ENCODE measurements at regions of chr1 and their contacts with region 1.

Region 1: GRCh38 chr1:154137888-154138287 is 17.0 kb downstream of the NUP210L start:
- DNase-seq: no peak
- ATAC-seq: no peak
- H3K4me3 ChIP-seq: no peak overlapping the region
- H3K27ac ChIP-seq: no peak overlapping the region
- H3K4me1 ChIP-seq: no peaks in the 10 kb centered on the region
- H3K27me3 ChIP-seq: no peaks in the 10 kb centered on the region
- CTCF ChIP-seq: no peak
- POLR2A ChIP-seq: no peak
- RAD21 ChIP-seq: no peak

Region 2: DNA sequence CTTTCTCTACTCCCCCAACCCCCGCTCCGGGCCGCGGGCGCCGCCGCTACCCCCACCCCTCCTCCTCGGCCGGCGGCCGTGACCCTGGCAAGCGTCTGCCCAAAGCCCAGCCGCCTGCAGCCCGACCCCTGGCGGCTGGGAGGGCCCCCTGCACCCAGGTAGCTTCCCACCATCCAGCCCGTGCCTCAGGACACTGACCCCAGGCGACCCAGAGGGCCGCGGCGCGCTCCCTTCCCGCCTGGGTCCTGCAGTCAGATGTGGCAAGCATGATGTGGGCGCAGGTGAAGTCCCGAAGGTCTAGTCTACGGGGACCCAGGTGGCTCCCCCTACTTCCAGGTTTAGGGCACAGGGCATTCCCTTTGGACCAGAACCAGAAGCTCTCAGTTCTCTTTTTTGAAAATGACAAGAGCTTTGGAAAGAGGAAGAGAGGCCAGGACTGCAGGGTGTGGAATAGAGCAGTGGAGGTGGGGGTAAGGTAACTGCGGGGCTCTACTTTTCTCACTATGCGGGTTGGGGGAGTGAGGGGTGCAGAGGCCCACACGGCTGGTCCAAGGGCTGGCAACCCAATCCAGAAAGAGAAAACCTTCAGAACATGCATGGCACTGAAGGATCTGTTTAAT is 191.2 kb before region 1 on chr1 and contains the start of gene DENND4B:
- CTCF ChIA-PET with region 1: no interaction called
- POLR2A ChIA-PET with region 1: no interaction called
- dilution Hi-C with region 1: no loop called
- in situ Hi-C with region 1: no loop called
- intact Hi-C with region 1: no loop called
- DNase-seq: peak; percentile 65
- ATAC-seq: peak; percentile 95
- H3K4me3 ChIP-seq: peak within 1 kb of the TSS; percentile 98
- H3K27ac ChIP-seq: peak within 1 kb of the TSS; percentile 97
- H3K4me1 ChIP-seq: peaks cover 9% of the 10 kb centered on the region
- H3K27me3 ChIP-seq: no peaks in the 10 kb centered on the region
- CTCF ChIP-seq: peak; percentile 92
- POLR2A ChIP-seq: no peak
- RAD21 ChIP-seq: peak; percentile 71
- total RNA-seq, gene DENND4B: 1.8 and 2.5 TPM in 2 replicates

Region 3: GRCh38 chr1:154014154-154014910 is 123.6 kb before region 1 on chr1:
- CTCF ChIA-PET with region 1: no interaction called
- POLR2A ChIA-PET with region 1: interaction called, 4 read pairs
- dilution Hi-C with region 1: no loop called
- in situ Hi-C with region 1: loop called (anchors 10 kb)
- intact Hi-C with region 1: loop called (anchors 5 kb)
- DNase-seq: peak; percentile 76
- ATAC-seq: peak; percentile 88
- H3K4me3 ChIP-seq: no peak overlapping the region
- H3K27ac ChIP-seq: no peak overlapping the region
- H3K4me1 ChIP-seq: no peaks in the 10 kb centered on the region
- H3K27me3 ChIP-seq: no peaks in the 10 kb centered on the region
- CTCF ChIP-seq: no peak
- POLR2A ChIP-seq: no peak
- RAD21 ChIP-seq: no peak

Region 4: DNA sequence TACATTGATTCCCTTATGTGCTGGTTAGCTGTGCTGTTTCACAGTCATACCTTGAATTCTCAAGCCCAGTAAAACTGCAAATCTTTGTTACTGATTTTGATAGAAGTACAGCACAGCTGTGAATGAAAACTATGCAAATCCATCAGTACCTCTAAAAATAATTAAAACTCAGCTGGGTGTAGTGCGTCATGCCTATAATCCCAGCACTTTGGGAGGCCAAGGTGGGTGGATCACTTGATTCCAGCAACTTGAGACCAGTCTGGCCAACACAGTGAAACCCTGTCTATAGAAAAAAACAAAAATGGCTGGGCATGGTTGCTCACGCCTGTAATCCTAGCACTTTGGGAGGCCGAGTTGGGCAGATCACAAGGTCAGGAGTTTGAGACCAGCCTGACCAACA is 44.2 kb before region 1 on chr1:
- CTCF ChIA-PET with region 1: no interaction called
- POLR2A ChIA-PET with region 1: no interaction called
- dilution Hi-C with region 1: no loop called
- in situ Hi-C with region 1: no loop called
- intact Hi-C with region 1: no loop called
- DNase-seq: no peak
- ATAC-seq: no peak
- H3K4me3 ChIP-seq: no peak overlapping the region
- H3K27ac ChIP-seq: no peak overlapping the region
- H3K4me1 ChIP-seq: no peaks in the 10 kb centered on the region
- H3K27me3 ChIP-seq: no peaks in the 10 kb centered on the region; the same call in 1 of the 2 replicates
- CTCF ChIP-seq: no peak
- POLR2A ChIP-seq: no peak
- RAD21 ChIP-seq: no peak

Region 5: DNA sequence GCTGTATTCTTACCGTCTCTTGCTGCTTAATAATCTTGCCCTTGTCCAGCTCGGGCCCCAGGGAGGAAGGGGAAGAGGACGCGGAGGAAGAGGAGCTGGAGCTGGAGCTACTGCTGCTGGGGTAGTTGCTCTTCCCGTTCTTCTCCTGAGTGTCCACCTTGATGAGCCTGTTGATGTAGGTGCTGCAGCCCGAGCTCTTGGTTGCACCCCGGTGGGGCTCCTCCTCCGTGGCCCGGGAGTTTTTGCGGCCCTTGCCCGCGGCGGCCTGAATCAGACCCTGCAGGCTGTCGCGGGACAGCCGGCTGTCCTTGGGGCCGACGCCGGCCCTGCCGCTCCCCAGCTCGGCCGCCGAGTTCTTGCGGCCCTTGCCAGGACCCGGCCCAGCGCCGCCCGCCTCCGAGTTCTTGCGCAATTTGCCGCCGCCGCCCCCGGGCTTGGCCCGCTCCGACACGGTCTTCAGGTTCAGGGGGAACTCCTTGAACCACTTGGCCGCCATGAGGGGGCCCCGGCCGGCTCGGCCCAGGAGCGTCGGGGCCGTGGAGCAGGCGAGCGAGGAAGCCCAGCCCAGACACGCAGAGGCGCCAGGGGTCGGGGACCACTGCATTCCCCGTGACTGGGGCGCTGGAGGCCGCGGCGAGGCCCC is 363.7 kb after region 1 on chr1:
- CTCF ChIA-PET with region 1: no interaction called
- POLR2A ChIA-PET with region 1: no interaction called
- dilution Hi-C with region 1: no loop called
- in situ Hi-C with region 1: no loop called
- intact Hi-C with region 1: no loop called
- DNase-seq: no peak
- ATAC-seq: peak; percentile 35
- H3K4me3 ChIP-seq: peak overlapping the region; percentile 2; the same call in 1 of the 2 replicates
- H3K27ac ChIP-seq: no peak overlapping the region
- H3K4me1 ChIP-seq: peaks cover 2% of the 10 kb centered on the region; the same call in 1 of the 2 replicates
- H3K27me3 ChIP-seq: peaks cover 69% of the 10 kb centered on the region
- CTCF ChIP-seq: no peak
- POLR2A ChIP-seq: no peak
- RAD21 ChIP-seq: no peak

Measured in IMR-90 (cell line).